CD8-positive, alpha-beta memory T cell (primary cell): ENCODE measurements at regions of chr3 and their contacts with region 1.

Region 1: DNA sequence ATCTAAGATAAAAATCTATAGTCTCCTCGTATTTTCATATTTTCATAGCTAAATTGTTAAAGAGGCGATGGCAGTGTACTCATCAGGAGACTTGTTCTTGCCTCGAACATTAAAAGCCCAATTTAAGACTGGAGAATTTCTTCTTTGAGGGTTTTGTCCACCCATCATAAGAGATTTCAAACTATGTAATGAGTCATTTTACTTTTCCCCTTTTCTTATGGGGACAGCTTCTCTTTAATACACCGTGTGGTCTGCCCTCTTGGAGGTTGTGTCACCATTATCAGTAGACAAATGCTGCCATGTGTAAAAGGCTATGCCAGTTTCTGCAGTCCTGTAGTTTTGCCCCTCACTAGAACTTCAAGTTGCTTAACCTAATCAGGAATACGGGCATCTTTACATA is 16.9 kb downstream of the TGFBR2 start:
- DNase-seq: no peak
- H3K4me3 ChIP-seq: no peak overlapping the region
- H3K4me3 Mint-ChIP-seq: peak overlapping the region; percentile 58 to 80 (median 68)
- H3K27ac ChIP-seq: no peak overlapping the region
- H3K27ac Mint-ChIP-seq: peak overlapping the region; percentile 71 to 89 (median 82)
- H3K4me1 ChIP-seq: peaks cover 98% of the 10 kb centered on the region
- H3K4me1 Mint-ChIP-seq: peaks cover 86 to 100% (median 99%) of the 10 kb centered on the region in 3 donors
- H3K27me3 ChIP-seq: no peaks in the 10 kb centered on the region
- H3K27me3 Mint-ChIP-seq: no peaks in the 10 kb centered on the region

Region 2: GRCh38 chr3:29384640-29385039 is 1238.7 kb before region 1 on chr3:
- CTCF ChIA-PET with region 1: no interaction called
- POLR2A ChIA-PET with region 1: no interaction called
- DNase-seq: no peak
- H3K4me3 ChIP-seq: no peak overlapping the region
- H3K4me3 Mint-ChIP-seq: no peak overlapping the region
- H3K27ac ChIP-seq: no peak overlapping the region
- H3K27ac Mint-ChIP-seq: no peak overlapping the region
- H3K4me1 ChIP-seq: no peaks in the 10 kb centered on the region
- H3K4me1 Mint-ChIP-seq: no peaks in the 10 kb centered on the region
- H3K27me3 ChIP-seq: no peaks in the 10 kb centered on the region
- H3K27me3 Mint-ChIP-seq: no peaks in the 10 kb centered on the region

Region 3: DNA sequence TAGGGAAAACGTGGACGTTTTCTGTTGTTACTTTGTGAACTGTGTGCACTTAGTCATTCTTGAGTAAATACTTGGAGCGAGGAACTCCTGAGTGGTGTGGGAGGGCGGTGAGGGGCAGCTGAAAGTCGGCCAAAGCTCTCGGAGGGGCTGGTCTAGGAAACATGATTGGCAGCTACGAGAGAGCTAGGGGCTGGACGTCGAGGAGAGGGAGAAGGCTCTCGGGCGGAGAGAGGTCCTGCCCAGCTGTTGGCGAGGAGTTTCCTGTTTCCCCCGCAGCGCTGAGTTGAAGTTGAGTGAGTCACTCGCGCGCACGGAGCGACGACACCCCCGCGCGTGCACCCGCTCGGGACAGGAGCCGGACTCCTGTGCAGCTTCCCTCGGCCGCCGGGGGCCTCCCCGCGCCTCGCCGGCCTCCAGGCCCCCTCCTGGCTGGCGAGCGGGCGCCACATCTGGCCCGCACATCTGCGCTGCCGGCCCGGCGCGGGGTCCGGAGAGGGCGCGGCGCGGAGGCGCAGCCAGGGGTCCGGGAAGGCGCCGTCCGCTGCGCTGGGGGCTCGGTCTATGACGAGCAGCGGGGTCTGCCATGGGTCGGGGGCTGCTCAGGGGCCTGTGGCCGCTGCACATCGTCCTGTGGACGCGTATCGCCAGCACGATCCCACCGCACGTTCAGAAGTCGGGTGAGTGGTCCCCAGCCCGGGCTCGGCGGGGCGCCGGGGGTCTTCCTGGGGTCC is 16.9 kb before region 1 on chr3 and contains the start of gene TGFBR2:
- CTCF ChIA-PET with region 1: interaction called, 30 read pairs
- POLR2A ChIA-PET with region 1: interaction called, 6 read pairs
- DNase-seq: peak; percentile 71 to 87 (median 76)
- H3K4me3 ChIP-seq: peak within 1 kb of the TSS; percentile 98
- H3K4me3 Mint-ChIP-seq: peak within 1 kb of the TSS; percentile 92 to 99 (median 98)
- H3K27ac ChIP-seq: peak within 1 kb of the TSS; percentile 78
- H3K27ac Mint-ChIP-seq: peak within 1 kb of the TSS; percentile 85 to 99 (median 98)
- H3K4me1 ChIP-seq: peaks cover 55% of the 10 kb centered on the region
- H3K4me1 Mint-ChIP-seq: peaks cover 59 to 66% (median 60%) of the 10 kb centered on the region in 3 donors
- H3K27me3 ChIP-seq: no peaks in the 10 kb centered on the region
- H3K27me3 Mint-ChIP-seq: no peaks in the 10 kb centered on the region
- total RNA-seq, gene TGFBR2: 55.3 to 56.3 TPM

Region 4: GRCh38 chr3:30793740-30794139 is 170.4 kb after region 1 on chr3:
- CTCF ChIA-PET with region 1: no interaction called
- POLR2A ChIA-PET with region 1: no interaction called
- DNase-seq: no peak
- H3K4me3 ChIP-seq: no peak overlapping the region
- H3K4me3 Mint-ChIP-seq: no peak overlapping the region
- H3K27ac ChIP-seq: no peak overlapping the region
- H3K27ac Mint-ChIP-seq: no peak overlapping the region
- H3K4me1 ChIP-seq: no peaks in the 10 kb centered on the region
- H3K4me1 Mint-ChIP-seq: no peaks in the 10 kb centered on the region
- H3K27me3 ChIP-seq: no peaks in the 10 kb centered on the region
- H3K27me3 Mint-ChIP-seq: peaks cover 0 to 13% of the 10 kb centered on the region in 2 donors